ENCODE measurements at regions of chr20 and their contacts with region 1.

Region 1: GRCh38 chr20:62616728-62617621 is 25.3 kb upstream of the SLCO4A1 start:
- DNase-seq: peak; percentile 66 to 81
- H3K4me3 ChIP-seq: no peak overlapping the region
- H3K27ac ChIP-seq: peak overlapping the region; percentile 8 to 39
- H3K4me1 ChIP-seq: peaks cover 0 to 11% (median 3%) of the 10 kb centered on the region in 4 donors
- H3K27me3 ChIP-seq: peaks cover 0 to 58% of the 10 kb centered on the region in 2 donors
- CTCF ChIP-seq: peak; percentile 79 to 97

Region 2: GRCh38 chr20:62500237-62500864 is 116.6 kb before region 1 on chr20:
- intact Hi-C with region 1: loop called (anchors 5 kb)
- DNase-seq: peak; percentile 71 to 82
- H3K4me3 ChIP-seq: no peak overlapping the region
- H3K27ac ChIP-seq: no peak overlapping the region
- H3K4me1 ChIP-seq: peaks cover 0 to 14% (median 0%) of the 10 kb centered on the region in 4 donors
- H3K27me3 ChIP-seq: peaks cover 0 to 49% of the 10 kb centered on the region in 2 donors
- CTCF ChIP-seq: peak; percentile 86 to 92

Region 3: DNA sequence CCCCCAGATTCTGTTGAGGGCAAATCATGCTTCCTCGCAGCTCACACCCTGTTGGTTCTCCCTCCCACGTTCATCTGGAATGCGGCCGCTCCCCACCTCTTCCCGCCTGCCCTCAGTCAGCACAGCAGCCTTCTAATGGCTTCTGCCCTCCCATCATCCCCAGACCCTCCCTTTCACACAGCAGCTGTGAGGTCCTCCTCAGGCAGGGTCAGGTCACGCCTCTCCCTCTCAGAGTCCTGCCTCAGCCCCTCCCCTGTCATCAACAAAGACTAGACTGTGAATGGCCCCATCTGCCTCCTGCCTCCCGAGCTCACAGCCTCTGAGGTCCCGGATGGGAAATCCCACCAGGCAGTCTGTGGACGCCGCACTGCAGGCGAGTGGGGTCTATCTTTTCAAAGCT is 397.7 kb after region 1 on chr20:
- intact Hi-C with region 1: no loop called
- DNase-seq: no peak
- H3K4me3 ChIP-seq: no peak overlapping the region
- H3K27ac ChIP-seq: no peak overlapping the region
- H3K4me1 ChIP-seq: no peaks in the 10 kb centered on the region
- H3K27me3 ChIP-seq: peaks cover 0 to 77% of the 10 kb centered on the region in 2 donors
- CTCF ChIP-seq: no peak